Testis (tissue), 5 donors: ENCODE measurements at regions of chr3 and their contacts with region 1.

Region 1: GRCh38 chr3:48439820-48440589 is at the starts of genes CCDC51 and TMA7:
- DNase-seq: peak; percentile 100
- H3K4me3 ChIP-seq: peak within 1 kb of the TSS; percentile 92 to 94
- H3K27ac ChIP-seq: peak within 1 kb of the TSS; percentile 80 to 90
- H3K4me1 ChIP-seq: peaks cover 30% of the 10 kb centered on the region
- H3K27me3 ChIP-seq: no peaks in the 10 kb centered on the region
- CTCF ChIP-seq: no peak
- POLR2A ChIP-seq: peak; percentile 44
- total RNA-seq, gene CCDC51: 11.7 to 16.0 TPM
- total RNA-seq, gene TMA7: 380 to 393 TPM

Region 2: GRCh38 chr3:47347217-47347801 is 1092.7 kb before region 1 on chr3:
- intact Hi-C with region 1: no loop called
- DNase-seq: no peak
- H3K4me3 ChIP-seq: no peak overlapping the region
- H3K27ac ChIP-seq: no peak overlapping the region
- H3K4me1 ChIP-seq: no peaks in the 10 kb centered on the region
- H3K27me3 ChIP-seq: no peaks in the 10 kb centered on the region
- CTCF ChIP-seq: no peak
- POLR2A ChIP-seq: no peak

Region 3: GRCh38 chr3:48273594-48274211 is 166.3 kb before region 1 on chr3:
- intact Hi-C with region 1: loop called (anchors 5 kb)
- DNase-seq: peak; percentile 74
- H3K4me3 ChIP-seq: no peak overlapping the region
- H3K27ac ChIP-seq: no peak overlapping the region
- H3K4me1 ChIP-seq: peaks cover 5% of the 10 kb centered on the region
- H3K27me3 ChIP-seq: no peaks in the 10 kb centered on the region
- CTCF ChIP-seq: peak; percentile 58 to 72 (median 62)
- POLR2A ChIP-seq: no peak

Region 4: DNA sequence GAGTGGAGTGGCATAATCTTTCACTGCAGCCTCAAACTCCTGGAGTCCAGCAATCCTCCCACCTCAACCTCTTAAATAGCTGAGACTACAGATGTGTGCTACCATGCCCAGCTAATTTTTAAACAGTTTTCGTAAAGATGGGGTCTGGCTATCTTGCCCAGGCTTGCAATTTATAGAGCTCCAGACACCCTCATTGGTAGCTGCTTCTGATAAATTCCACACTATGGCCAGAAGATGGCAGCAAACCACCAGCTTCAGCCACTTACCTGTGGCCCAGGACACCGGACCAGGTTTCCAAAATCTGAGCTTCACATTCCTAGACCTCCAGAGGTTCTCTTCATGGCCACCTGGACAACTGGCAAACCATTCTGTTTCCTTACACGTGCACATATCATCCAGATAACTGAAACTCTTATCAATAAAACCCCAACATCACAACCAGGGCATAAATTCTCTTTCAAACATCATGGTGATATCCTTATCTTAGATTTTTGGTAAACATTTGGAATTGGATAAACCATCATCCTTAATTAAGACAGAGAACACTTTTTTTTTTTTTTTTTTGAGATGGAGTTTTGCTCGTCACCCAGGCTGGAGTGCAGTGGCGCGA is 39.1 kb before region 1 on chr3:
- intact Hi-C with region 1: loop called (anchors 5 kb)
- DNase-seq: peak; percentile 70
- H3K4me3 ChIP-seq: no peak overlapping the region
- H3K27ac ChIP-seq: no peak overlapping the region
- H3K4me1 ChIP-seq: peaks cover 5% of the 10 kb centered on the region
- H3K27me3 ChIP-seq: no peaks in the 10 kb centered on the region
- CTCF ChIP-seq: peak; percentile 79 to 88 (median 81)
- POLR2A ChIP-seq: no peak